ENCODE measurements at regions of chr1 and their contacts with region 1.

Region 1: GRCh38 chr1:43934101-43934985 is 742 bp downstream of the ARTN start:
- DNase-seq: peak; percentile 92
- ATAC-seq: peak; percentile 60
- H3K4me3 Mint-ChIP-seq: peak overlapping the region; percentile 84
- H3K27ac Mint-ChIP-seq: peak overlapping the region; percentile 88
- H3K4me1 Mint-ChIP-seq: peaks cover 54% of the 10 kb centered on the region
- H3K27me3 Mint-ChIP-seq: peaks cover 8% of the 10 kb centered on the region
- CTCF ChIP-seq: peak; percentile 78

Region 2: GRCh38 chr1:43660355-43660754 is 274.0 kb before region 1 on chr1:
- CTCF ChIA-PET with region 1: interaction called, 21 read pairs
- POLR2A ChIA-PET with region 1: no interaction called
- DNase-seq: peak; percentile 28
- ATAC-seq: peak; percentile 86
- H3K4me3 Mint-ChIP-seq: peak overlapping the region; percentile 41
- H3K27ac Mint-ChIP-seq: peak overlapping the region; percentile 98
- H3K4me1 Mint-ChIP-seq: peaks cover 25% of the 10 kb centered on the region
- H3K27me3 Mint-ChIP-seq: no peaks in the 10 kb centered on the region; the same call in 1 of the 2 replicates
- CTCF ChIP-seq: no peak

Region 3: GRCh38 chr1:43763497-43763973 is 170.8 kb before region 1 on chr1:
- CTCF ChIA-PET with region 1: interaction called, 992 read pairs
- POLR2A ChIA-PET with region 1: interaction called, 62 read pairs
- DNase-seq: peak; percentile 64
- ATAC-seq: peak; percentile 66
- H3K4me3 Mint-ChIP-seq: no peak overlapping the region
- H3K27ac Mint-ChIP-seq: no peak overlapping the region
- H3K4me1 Mint-ChIP-seq: peaks cover 16% of the 10 kb centered on the region
- H3K27me3 Mint-ChIP-seq: no peaks in the 10 kb centered on the region
- CTCF ChIP-seq: peak; percentile 72

Region 4: DNA sequence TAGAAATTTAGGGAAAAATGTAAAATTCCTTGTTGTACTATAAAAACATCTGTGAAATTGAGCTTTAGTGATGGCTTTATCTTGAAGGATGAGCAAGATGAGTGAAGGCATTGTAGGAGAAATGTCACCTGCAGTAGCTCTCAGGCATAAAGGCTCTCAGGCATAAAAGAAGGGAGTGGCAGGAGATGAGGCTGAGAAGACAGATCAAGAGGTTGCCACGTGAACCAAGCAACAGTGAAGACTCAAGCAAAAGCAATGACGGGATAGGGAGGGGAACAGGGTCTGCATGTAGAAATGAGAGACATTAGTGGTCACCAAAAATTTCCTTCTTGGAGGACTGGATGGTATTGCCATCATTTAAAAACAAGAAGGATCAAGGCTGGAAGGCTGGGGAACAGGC is 128.2 kb before region 1 on chr1:
- CTCF ChIA-PET with region 1: interaction called, 11 read pairs
- POLR2A ChIA-PET with region 1: no interaction called
- DNase-seq: no peak
- ATAC-seq: no peak
- H3K4me3 Mint-ChIP-seq: no peak overlapping the region
- H3K27ac Mint-ChIP-seq: no peak overlapping the region
- H3K4me1 Mint-ChIP-seq: peaks cover under 1% of the 10 kb centered on the region; the same call in 1 of the 2 replicates
- H3K27me3 Mint-ChIP-seq: no peaks in the 10 kb centered on the region; the same call in 1 of the 2 replicates
- CTCF ChIP-seq: no peak

Region 5: DNA sequence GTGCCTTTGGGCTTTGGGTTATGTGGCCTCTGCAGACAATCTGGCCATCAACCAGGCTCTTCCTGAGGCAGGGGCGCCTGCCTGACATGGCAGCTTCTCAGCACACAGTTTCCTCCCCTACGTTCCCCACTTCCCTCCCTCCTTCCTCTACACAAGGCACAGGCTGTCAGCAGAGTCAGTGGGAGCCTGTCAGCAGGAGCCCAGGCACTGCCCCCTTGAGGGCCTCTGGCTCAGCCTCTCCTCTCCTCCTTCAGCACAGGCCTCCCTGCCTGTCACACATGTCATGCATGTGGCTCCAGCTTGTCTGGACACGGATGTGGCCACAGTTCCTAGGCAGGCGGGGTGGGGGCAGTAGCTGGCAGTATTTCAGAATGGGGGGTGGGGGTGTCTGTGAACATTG is 52.9 kb before region 1 on chr1:
- CTCF ChIA-PET with region 1: interaction called, 15 read pairs
- POLR2A ChIA-PET with region 1: interaction called, 3 read pairs
- DNase-seq: no peak
- ATAC-seq: peak; percentile 31; the same call in 1 of the 2 replicates
- H3K4me3 Mint-ChIP-seq: no peak overlapping the region
- H3K27ac Mint-ChIP-seq: no peak overlapping the region
- H3K4me1 Mint-ChIP-seq: peaks cover 27% of the 10 kb centered on the region
- H3K27me3 Mint-ChIP-seq: no peaks in the 10 kb centered on the region
- CTCF ChIP-seq: no peak

Region 6: GRCh38 chr1:43952731-43953346 is 18.5 kb after region 1 on chr1:
- CTCF ChIA-PET with region 1: interaction called, 172 read pairs
- POLR2A ChIA-PET with region 1: interaction called, 4 read pairs
- DNase-seq: peak; percentile 66
- ATAC-seq: peak; percentile 96
- H3K4me3 Mint-ChIP-seq: no peak overlapping the region
- H3K27ac Mint-ChIP-seq: peak overlapping the region; percentile 50; the same call in 1 of the 2 replicates
- H3K4me1 Mint-ChIP-seq: peaks cover 18% of the 10 kb centered on the region
- H3K27me3 Mint-ChIP-seq: no peaks in the 10 kb centered on the region
- CTCF ChIP-seq: no peak

Measured in WTC11 (cell line).